ENCODE measurements at regions of chr9 and their contacts with region 1.

Region 1: GRCh38 chr9:126704873-126705766 is 91.4 kb downstream of the LMX1B start:
- DNase-seq: peak; percentile 71 to 97 (median 83)

Region 2: GRCh38 chr9:126733005-126733404 is 27.9 kb after region 1 on chr9:
- intact Hi-C with region 1: no loop called
- DNase-seq: no peak

Region 3: GRCh38 chr9:126781186-126782052 is 76.3 kb after region 1 on chr9:
- intact Hi-C with region 1: loop called (anchors 1 kb)
- DNase-seq: peak; percentile 71 to 97 (median 90)

Region 4: GRCh38 chr9:126927419-126927818 is 222.3 kb after region 1 on chr9:
- intact Hi-C with region 1: no loop called
- DNase-seq: no peak

Measured in posterior cingulate gyrus (tissue), 11 donors.